ENCODE measurements at regions of chr1 and their contacts with region 1.

Region 1: GRCh38 chr1:201224666-201225370 is 34.2 kb downstream of the IGFN1 start:
- DNase-seq: no peak
- H3K4me3 ChIP-seq: no peak overlapping the region
- H3K27ac ChIP-seq: no peak overlapping the region
- H3K4me1 ChIP-seq: peaks cover 7% of the 10 kb centered on the region
- H3K27me3 ChIP-seq: no peaks in the 10 kb centered on the region
- CTCF ChIP-seq: no peak

Region 2: GRCh38 chr1:200971955-200972711 is 252.7 kb before region 1 on chr1:
- CTCF ChIA-PET with region 1: interaction called, 6 read pairs
- POLR2A ChIA-PET with region 1: no interaction called
- intact Hi-C with region 1: loop called (anchors 5 kb)
- DNase-seq: peak; percentile 43 to 72
- H3K4me3 ChIP-seq: no peak overlapping the region
- H3K27ac ChIP-seq: no peak overlapping the region
- H3K4me1 ChIP-seq: peaks cover 24% of the 10 kb centered on the region
- H3K27me3 ChIP-seq: no peaks in the 10 kb centered on the region
- CTCF ChIP-seq: peak; percentile 92

Region 3: GRCh38 chr1:201085916-201086735 is 138.7 kb before region 1 on chr1:
- CTCF ChIA-PET with region 1: interaction called, 6 read pairs
- POLR2A ChIA-PET with region 1: no interaction called
- intact Hi-C with region 1: loop called (anchors 1 kb)
- DNase-seq: peak; percentile 41 to 62
- H3K4me3 ChIP-seq: no peak overlapping the region
- H3K27ac ChIP-seq: no peak overlapping the region
- H3K4me1 ChIP-seq: no peaks in the 10 kb centered on the region
- H3K27me3 ChIP-seq: peaks cover 33% of the 10 kb centered on the region; the same call in 1 of the 2 replicates
- CTCF ChIP-seq: peak; percentile 75

Region 4: DNA sequence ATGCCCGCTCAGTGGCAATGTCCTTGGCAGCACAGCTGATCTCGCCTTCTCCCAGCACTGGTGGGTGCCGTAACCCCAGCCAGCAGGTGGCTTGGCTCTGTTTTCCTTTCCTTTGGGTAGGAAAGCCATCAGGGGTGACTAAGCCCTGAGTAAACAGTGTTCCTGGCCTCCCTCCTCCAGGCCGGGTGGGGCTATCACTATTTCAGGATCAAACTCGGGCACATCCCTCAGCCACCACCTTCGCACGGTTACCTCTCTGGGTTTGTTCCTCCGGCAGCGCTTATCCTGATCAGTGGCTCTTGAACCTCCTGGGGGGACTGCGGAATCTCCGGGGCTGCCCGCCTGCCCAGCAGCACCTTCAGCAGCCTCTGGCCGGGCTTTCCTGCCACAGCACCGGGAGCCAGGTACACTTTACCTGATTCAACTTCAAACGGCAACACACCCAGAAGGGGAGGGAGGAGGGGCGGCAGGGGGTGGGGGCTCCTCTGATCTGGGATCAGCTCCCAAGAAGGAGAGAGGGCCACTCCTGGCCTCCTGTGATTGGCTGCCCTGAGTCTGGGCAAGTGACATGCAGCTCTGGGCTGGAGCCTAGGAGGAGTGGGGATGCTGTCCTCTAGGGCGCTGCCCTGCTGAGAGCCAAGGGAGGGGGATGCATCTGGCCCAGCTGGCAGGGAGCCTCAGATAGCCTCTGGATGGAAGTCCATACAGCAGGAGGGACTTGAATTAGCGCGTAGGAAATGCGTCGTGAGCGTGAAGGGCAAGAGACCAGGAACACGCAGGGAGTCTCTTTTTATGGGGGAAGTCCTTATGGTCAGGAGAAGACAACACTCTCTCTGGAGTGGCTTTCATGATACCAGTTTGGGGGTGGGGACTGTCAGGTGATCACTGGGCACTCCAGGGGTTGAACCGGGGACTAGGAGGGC is 97.7 kb before region 1 on chr1 and contains the start of gene ASCL5:
- CTCF ChIA-PET with region 1: no interaction called
- POLR2A ChIA-PET with region 1: no interaction called
- intact Hi-C with region 1: loop called (anchors 5 kb)
- DNase-seq: peak; percentile 72 to 74
- H3K4me3 ChIP-seq: peak within 1 kb of the TSS; percentile 26; the same call in 1 of the 2 replicates
- H3K27ac ChIP-seq: no peak within 1 kb of the TSS
- H3K4me1 ChIP-seq: peaks cover 15% of the 10 kb centered on the region
- H3K27me3 ChIP-seq: no peaks in the 10 kb centered on the region
- CTCF ChIP-seq: peak; percentile 30; the same call in 1 of the 2 replicates
- total RNA-seq, gene ASCL5: 0.24 and 0.38 TPM in 2 replicates

Region 5: GRCh38 chr1:201149400-201149799 is 75.4 kb before region 1 on chr1:
- CTCF ChIA-PET with region 1: interaction called, 3 read pairs
- POLR2A ChIA-PET with region 1: no interaction called
- intact Hi-C with region 1: loop called (anchors 1 kb)
- DNase-seq: peak in 1 of 2 experiments; percentile 47
- H3K4me3 ChIP-seq: no peak overlapping the region
- H3K27ac ChIP-seq: no peak overlapping the region
- H3K4me1 ChIP-seq: 0 out of 2 replicates have a peak, but pooled peaks cover 6% of the 10 kb centered on the region
- H3K27me3 ChIP-seq: no peaks in the 10 kb centered on the region
- CTCF ChIP-seq: peak; percentile 70